Body of pancreas (tissue), 4 donors: ENCODE measurements at regions of chr21 and their contacts with region 1.

Region 1: DNA sequence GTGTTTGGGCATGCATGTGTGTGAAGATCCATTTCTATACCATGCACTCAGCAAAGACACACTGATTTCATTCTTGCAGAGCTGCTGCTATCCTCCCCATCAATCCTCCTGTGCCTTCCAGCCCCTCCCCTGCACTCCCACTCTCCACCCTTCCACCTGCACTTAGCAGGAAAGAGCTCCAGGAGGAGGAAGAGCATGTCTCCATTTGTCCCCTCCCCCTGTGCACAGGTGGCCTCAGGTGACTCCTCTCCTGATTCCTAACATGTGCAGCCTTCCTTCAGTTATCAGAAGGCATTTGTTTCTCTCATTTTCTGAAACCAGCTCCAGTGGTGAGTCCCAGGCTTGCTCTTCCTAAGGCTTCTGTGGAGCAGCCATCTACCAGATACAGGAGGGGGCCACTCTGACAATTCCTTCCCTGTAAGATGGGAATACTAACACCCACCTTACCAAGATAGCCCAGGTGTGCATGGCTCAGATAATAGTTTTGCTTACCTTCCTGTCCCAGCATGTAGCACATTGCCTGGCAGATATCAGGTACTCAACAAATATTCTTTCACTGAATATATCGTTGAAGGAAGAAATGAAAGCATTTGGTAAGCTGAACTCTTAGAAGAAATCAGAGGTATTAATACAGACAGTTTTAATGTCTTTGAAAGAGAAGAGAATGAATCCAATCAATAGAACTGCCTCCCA is 21.9 kb upstream of the FAM3B start:
- DNase-seq: no peak
- ATAC-seq: no peak
- H3K4me3 ChIP-seq: no peak overlapping the region
- H3K27ac ChIP-seq: no peak overlapping the region
- H3K4me1 ChIP-seq: no peaks in the 10 kb centered on the region
- H3K27me3 ChIP-seq: no peaks in the 10 kb centered on the region
- CTCF ChIP-seq: no peak
- POLR2A ChIP-seq: no peak

Region 2: GRCh38 chr21:41361786-41362604 is 67.3 kb after region 1 on chr21 and contains the start of gene MX2:
- intact Hi-C with region 1: loop called (anchors 10 kb)
- DNase-seq: peak in 3 of 4 donors; percentile 20 to 71 (median 34)
- ATAC-seq: peak; percentile 25
- H3K4me3 ChIP-seq: no peak within 1 kb of the TSS
- H3K27ac ChIP-seq: peak within 1 kb of the TSS; percentile 3 to 80 (median 46)
- H3K4me1 ChIP-seq: peaks cover 21% of the 10 kb centered on the region
- H3K27me3 ChIP-seq: no peaks in the 10 kb centered on the region
- CTCF ChIP-seq: no peak
- POLR2A ChIP-seq: peak in 2 of 3 donors; percentile 28 to 59
- total RNA-seq, gene MX2: 2.3 to 12.2 TPM

Region 3: DNA sequence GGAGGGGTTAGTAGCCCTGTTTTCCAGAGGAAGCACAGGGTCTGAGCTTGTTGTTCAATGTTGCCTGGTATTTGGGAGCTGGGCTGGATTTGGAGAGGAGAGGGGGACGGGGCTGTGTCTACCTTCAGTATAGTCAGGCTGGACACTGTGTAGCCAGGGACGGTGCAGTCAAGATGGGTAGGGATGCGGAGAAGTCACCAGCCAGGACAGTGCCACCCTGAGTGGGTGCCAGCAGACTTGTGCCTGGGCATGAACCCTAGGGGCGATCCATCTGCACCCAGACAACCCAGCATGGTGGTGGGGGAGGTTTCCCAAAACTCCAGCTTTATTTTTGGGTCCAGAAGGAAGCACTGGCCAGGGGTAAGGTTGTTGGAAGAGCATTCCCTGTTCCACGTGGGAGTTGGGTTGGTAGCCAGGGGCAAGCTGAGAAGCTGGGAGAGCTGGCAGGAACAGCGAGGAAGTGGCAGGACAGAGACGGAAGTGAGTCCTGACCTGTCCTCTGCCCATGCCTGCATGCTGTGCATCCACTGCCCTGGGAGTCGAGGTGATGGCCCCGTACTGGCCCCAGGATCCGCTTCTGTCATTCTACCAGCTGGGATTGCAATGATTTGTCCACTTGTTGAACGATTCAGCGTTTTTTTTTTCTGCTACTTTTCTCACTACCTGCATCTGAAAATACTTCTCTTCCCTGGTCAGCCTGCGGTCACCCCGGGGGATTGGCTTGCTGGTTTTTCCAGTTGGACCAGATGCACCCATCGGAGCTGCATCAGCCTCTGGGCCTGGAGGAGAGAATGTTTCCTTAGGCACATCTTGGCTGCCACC is 241.3 kb after region 1 on chr21:
- intact Hi-C with region 1: no loop called
- DNase-seq: peak; percentile 37 to 67 (median 54)
- ATAC-seq: peak; percentile 56
- H3K4me3 ChIP-seq: no peak overlapping the region
- H3K27ac ChIP-seq: peak overlapping the region in 3 of 4 donors; percentile 10 to 40 (median 38)
- H3K4me1 ChIP-seq: peaks cover 21% of the 10 kb centered on the region
- H3K27me3 ChIP-seq: no peaks in the 10 kb centered on the region
- CTCF ChIP-seq: no peak
- POLR2A ChIP-seq: no peak

Region 4: DNA sequence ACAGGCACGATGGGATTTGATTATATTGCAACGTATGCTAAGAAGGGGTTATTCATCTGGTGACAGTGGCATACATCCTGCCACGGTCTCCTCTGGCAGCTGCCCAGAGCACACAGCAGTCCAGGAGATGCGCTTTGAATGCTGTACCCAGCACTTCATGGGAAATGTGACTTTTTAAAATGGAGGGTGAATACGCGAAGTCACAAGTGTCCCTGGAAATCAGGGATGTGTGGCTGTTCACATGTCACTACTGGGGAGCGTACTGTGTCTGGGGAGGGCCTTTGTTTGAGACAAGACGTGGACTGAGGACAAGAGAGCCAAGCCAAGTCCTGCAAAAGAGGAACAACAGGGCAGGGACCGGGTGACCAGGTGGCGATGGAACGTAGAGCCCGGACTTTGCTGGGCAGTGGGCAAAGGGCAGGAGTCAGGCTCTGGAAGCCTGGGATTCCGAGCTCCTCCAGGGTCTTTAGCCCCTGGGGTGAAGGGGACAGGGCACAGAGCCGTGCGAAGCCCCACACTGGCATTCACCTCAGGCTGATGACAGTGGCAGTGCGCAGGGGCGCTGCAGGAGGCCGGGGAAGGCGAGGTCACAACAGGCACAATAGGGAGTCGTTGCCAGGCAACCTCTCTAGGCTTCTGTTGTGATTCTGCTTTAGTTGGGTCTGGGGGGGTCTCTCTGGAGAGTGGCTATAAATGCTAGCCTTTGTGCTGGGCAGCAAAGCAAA is 726.8 kb after region 1 on chr21:
- intact Hi-C with region 1: no loop called
- DNase-seq: peak in 3 of 4 donors; percentile 41 to 52 (median 49)
- ATAC-seq: peak; percentile 63
- H3K4me3 ChIP-seq: no peak overlapping the region
- H3K27ac ChIP-seq: peak overlapping the region in 1 of 4 donors; percentile 33
- H3K4me1 ChIP-seq: no peaks in the 10 kb centered on the region
- H3K27me3 ChIP-seq: no peaks in the 10 kb centered on the region
- CTCF ChIP-seq: no peak
- POLR2A ChIP-seq: peak in 1 of 3 donors; percentile 12